Pancreas (tissue), 10 donors: ENCODE measurements at regions of chr12 and their contacts with region 1.

Region 1: GRCh38 chr12:113048716-113049127 is 7.8 kb upstream of the DTX1 start:
- DNase-seq: peak in 3 of 6 donors; percentile 46 to 68 (median 50)
- ATAC-seq: peak; percentile 86 to 98 (median 96)
- H3K4me3 ChIP-seq: no peak overlapping the region
- H3K27ac ChIP-seq: no peak overlapping the region
- H3K4me1 ChIP-seq: no peaks in the 10 kb centered on the region
- H3K27me3 ChIP-seq: no peaks in the 10 kb centered on the region
- CTCF ChIP-seq: peak; percentile 74 to 84 (median 79)

Region 2: DNA sequence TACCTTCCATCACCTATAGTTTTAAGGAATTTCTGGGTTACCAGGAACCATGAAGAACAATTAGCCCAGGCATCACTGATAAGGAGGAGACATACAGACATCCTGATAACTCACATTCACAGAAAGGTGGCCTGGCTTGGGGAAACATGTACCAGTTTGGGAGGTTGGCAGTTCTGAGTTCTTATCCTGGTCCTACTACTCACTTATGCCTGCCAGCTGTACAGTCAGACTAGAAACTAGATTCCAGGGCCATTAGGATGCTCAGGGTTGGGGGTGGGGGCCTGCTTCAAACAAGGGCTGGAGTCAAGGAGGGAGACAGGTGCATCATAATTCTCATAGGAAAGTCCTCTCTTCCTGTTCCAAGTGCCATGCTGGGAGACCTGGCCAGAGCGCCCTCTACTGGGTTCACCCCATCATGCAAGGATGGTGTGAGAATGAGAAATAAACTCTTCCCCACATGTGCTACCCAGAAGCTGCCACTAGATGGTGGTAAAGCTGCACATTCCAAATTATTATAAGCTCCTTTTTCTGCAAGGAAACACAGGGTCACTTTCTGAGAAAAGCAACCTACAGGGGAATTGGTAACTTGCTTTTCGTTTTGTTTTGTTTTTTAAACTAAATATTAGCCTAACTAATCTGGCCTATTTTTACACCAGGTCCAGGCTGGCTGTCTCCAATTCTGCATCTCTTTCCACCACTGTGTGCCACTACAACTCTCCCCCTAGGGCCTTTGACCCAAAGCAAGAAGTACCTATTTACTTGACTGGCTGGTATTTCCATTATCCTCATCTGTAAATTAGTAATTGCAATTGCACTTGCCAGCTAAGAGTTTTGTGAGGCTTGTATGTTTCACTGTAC is 56.0 kb before region 1 on chr12:
- intact Hi-C with region 1: no loop called
- DNase-seq: peak in 3 of 6 donors; percentile 28 to 54 (median 33)
- ATAC-seq: peak in 3 of 4 donors; percentile 71 to 78 (median 78)
- H3K4me3 ChIP-seq: no peak overlapping the region
- H3K27ac ChIP-seq: no peak overlapping the region
- H3K4me1 ChIP-seq: no peaks in the 10 kb centered on the region
- H3K27me3 ChIP-seq: no peaks in the 10 kb centered on the region
- CTCF ChIP-seq: peak; percentile 64 to 78 (median 66)

Region 3: DNA sequence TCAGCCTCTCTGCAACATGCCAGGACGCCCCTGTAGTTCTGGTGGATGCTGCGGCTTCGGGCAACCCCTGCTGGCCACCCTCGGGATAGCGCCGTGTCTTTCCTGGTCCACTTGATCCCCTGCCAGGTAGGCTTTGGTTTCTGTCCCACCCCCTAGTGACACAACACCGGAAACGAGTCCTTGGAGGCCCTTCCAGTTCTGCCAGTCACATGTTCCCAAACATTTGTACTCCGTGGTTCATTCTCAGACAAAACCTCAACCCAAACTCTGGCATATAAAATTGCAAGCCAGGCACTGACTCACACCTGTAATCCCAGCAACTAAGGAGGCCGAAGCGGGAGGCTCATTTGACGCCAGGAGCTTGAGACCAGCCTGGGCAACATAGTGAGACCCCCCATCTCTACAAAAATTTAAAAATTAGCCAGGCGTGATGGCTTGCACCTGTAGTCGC is 49.7 kb after region 1 on chr12:
- intact Hi-C with region 1: loop called in 2 of 3 experiments (anchors 5 to 10 kb)
- DNase-seq: peak; percentile 86 to 95 (median 92)
- ATAC-seq: peak; percentile 92 to 98 (median 98)
- H3K4me3 ChIP-seq: no peak overlapping the region
- H3K27ac ChIP-seq: peak overlapping the region; percentile 42 to 69 (median 53)
- H3K4me1 ChIP-seq: no peaks in the 10 kb centered on the region
- H3K27me3 ChIP-seq: no peaks in the 10 kb centered on the region
- CTCF ChIP-seq: peak; percentile 78 to 85 (median 82)

Region 4: DNA sequence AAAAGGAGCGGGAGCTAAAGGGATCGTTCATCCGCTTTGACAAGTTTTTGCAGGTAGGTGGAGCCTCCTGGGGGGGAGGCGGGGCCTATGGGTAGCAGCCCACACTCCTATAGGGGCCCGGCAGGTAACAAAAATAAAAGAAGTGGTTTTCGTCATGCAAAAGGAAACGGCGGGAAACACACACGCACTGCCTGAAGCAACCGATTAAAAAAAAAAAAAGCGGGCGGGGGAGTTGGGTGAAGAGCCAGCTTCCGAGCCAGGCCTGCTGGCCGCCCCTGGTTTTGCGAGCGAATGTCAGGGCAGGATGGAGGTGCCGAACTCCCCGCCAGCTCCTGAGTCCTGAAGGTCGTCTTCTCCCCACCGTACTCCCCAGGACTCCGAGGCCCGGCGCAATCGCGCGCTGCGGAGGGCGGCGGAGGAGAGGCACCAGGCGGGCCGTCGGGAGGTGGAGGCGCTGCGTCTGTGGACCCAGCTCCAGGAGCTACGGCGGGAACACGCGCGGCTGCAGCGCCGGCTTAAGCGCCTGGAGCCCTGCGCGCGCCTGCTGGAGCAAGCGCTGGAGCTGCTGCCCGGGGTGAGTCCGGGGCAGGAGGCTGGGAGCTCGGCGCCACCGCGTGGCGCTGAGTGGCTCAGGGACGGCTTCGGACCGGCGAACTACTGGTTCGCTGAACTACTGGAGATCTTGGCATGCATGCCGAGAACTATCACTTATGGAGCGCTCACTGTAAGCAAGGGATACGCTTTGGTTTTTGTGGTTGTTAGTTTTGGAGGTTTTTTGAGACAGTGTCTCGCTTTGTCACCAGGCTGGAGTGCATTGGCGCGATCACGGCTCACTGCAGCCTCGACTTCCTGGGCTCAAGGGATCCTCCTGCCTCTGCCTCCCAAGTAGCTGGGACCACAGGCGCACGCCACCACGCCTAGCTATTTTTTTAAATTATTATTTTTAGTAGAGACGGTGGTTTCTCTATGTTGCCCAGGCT is 104.4 kb after region 1 on chr12:
- intact Hi-C with region 1: loop called in 2 of 3 experiments (anchors 5 to 10 kb)
- DNase-seq: peak; percentile 51 to 88 (median 68)
- ATAC-seq: peak; percentile 78 to 93 (median 90)
- H3K4me3 ChIP-seq: peak overlapping the region in 2 of 4 donors; percentile 31 to 48
- H3K27ac ChIP-seq: no peak overlapping the region
- H3K4me1 ChIP-seq: peaks cover 0 to 6% (median 0%) of the 10 kb centered on the region in 3 donors
- H3K27me3 ChIP-seq: no peaks in the 10 kb centered on the region
- CTCF ChIP-seq: peak in 3 of 4 donors; percentile 25 to 39 (median 29)

Region 5: DNA sequence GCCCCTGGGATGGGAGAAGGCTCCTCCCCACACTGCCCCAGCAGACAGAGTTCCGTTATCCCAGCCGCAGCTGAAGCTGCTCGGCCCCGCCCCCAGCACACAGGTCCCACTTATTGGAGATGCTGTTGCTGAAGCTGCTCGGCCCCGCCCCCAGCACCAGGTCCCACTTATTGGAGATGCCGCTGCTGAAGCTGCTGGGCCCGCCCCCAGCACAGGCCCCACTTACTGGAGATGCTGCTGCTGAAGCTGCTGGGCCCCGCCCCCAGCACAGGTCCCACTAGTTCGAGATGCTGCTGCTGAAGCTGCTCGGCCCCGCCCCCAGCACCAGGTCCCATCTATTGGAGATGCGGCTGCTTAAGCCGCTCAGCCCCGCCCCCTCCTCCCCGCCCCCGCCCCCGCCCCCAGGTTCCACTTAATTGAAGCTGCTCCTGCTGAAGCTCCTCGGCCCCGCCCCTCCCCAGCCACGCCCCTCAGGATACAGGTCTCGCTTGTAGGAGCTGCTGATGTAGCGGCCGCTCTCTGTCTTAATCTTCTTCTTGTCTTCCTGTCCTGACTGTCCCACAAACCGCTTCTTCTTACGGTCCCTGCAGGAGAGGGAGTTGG is 112.8 kb after region 1 on chr12:
- intact Hi-C with region 1: loop called in 2 of 3 experiments (anchors 5 to 10 kb)
- DNase-seq: no peak
- ATAC-seq: no peak
- H3K4me3 ChIP-seq: no peak overlapping the region
- H3K27ac ChIP-seq: no peak overlapping the region
- H3K4me1 ChIP-seq: no peaks in the 10 kb centered on the region
- H3K27me3 ChIP-seq: no peaks in the 10 kb centered on the region
- CTCF ChIP-seq: no peak

Region 6: GRCh38 chr12:113174461-113175384 is 126.0 kb after region 1 on chr12:
- intact Hi-C with region 1: loop called in 2 of 3 experiments (anchors 1 to 5 kb)
- DNase-seq: peak; percentile 52 to 94 (median 82)
- ATAC-seq: peak; percentile 78 to 97 (median 90)
- H3K4me3 ChIP-seq: no peak overlapping the region
- H3K27ac ChIP-seq: no peak overlapping the region
- H3K4me1 ChIP-seq: no peaks in the 10 kb centered on the region
- H3K27me3 ChIP-seq: no peaks in the 10 kb centered on the region
- CTCF ChIP-seq: peak; percentile 98 to 99 (median 98)